ENCODE measurements at regions of chr16 and their contacts with region 1.

Region 1: GRCh38 chr16:89860747-89861304 is 12.6 kb upstream of the TCF25 start:
- DNase-seq: peak; percentile 82
- ATAC-seq: peak; percentile 81
- H3K4me3 Mint-ChIP-seq: no peak overlapping the region
- H3K27ac Mint-ChIP-seq: no peak overlapping the region
- H3K4me1 Mint-ChIP-seq: peaks cover 32% of the 10 kb centered on the region
- H3K27me3 Mint-ChIP-seq: no peaks in the 10 kb centered on the region

Region 2: DNA sequence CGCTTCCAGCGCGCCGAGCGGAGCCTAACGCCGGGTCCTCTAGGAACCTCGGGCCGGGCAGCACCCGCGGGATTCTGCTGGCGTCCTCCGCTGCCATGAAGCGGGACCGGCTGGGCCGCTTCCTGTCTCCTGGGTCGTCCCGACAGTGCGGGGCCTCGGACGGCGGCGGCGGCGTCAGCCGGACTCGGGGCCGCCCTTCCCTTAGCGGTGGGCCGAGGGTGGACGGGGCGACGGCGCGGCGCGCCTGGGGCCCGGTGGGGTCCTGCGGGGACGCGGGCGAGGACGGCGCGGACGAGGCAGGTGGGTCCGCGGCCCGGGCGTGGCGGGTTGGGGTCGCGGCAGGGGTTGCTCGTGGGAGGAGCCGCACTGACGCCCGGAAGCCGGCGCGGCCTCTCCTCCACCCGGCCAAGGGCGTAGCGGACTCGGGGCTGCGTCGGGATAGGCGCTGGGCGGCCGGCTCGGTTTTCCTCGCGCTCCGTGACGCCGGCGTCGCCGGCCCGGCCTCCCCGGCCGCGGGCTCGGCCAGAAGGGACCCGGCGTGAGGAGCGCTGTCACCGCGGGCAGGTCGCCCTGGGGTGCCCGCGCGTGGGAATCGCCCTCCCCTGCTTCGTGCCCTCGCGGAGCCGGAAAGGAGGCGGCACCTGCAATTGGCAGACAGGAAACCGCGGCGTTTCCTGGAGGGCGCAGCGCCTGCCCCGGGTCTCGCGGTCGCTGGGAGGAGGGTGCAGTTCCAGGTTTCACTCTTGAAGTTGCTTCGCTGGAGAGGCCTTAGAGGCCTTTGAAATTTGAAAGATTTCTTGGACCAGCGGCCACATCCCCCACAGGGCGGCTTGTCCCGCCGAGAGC is 139.1 kb before region 1 on chr16:
- CTCF ChIA-PET with region 1: interaction called, 17 read pairs
- POLR2A ChIA-PET with region 1: no interaction called
- DNase-seq: peak; percentile 91
- ATAC-seq: peak; percentile 40
- H3K4me3 Mint-ChIP-seq: peak overlapping the region; percentile 93
- H3K27ac Mint-ChIP-seq: peak overlapping the region; percentile 98
- H3K4me1 Mint-ChIP-seq: peaks cover 40% of the 10 kb centered on the region
- H3K27me3 Mint-ChIP-seq: no peaks in the 10 kb centered on the region

Region 3: DNA sequence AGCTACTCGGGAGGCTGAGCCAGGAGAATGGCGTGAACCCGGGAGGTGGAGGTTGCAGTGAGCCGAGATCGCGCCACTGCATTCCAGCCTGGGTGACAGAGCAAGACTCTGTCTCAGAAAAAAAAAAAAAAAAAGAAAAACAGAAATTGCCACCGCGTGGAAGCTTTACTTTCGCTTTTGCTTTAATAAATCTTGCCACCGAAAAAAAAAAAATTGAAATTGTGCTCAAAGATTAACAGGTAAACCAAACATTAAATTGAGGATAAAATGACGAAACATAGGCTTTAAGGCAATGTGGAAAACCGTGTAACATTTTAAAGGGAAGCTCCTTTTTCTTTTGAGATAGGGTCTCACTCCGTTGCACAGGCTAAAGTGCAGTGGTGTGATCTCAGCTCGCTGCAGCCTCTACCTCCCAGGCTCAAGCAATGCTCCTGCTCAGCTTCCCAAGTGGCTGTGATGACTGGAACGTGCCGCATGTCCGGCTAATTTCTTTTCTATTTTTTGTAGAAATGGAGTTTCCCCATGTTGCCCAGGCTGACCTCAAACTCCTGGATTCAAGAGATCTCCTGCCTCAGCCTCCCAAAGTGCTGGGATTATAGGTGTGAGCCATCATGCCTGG is 99.4 kb before region 1 on chr16:
- CTCF ChIA-PET with region 1: interaction called, 17 read pairs
- POLR2A ChIA-PET with region 1: no interaction called
- DNase-seq: no peak
- ATAC-seq: peak; percentile 31
- H3K4me3 Mint-ChIP-seq: peak overlapping the region; percentile 78
- H3K27ac Mint-ChIP-seq: peak overlapping the region; percentile 87
- H3K4me1 Mint-ChIP-seq: peaks cover 36% of the 10 kb centered on the region
- H3K27me3 Mint-ChIP-seq: no peaks in the 10 kb centered on the region

Region 4: GRCh38 chr16:89791278-89791995 is 69.4 kb before region 1 on chr16:
- CTCF ChIA-PET with region 1: interaction called, 22 read pairs
- POLR2A ChIA-PET with region 1: no interaction called
- DNase-seq: no peak
- ATAC-seq: no peak
- H3K4me3 Mint-ChIP-seq: no peak overlapping the region
- H3K27ac Mint-ChIP-seq: no peak overlapping the region
- H3K4me1 Mint-ChIP-seq: peaks cover 13% of the 10 kb centered on the region
- H3K27me3 Mint-ChIP-seq: no peaks in the 10 kb centered on the region

Region 5: DNA sequence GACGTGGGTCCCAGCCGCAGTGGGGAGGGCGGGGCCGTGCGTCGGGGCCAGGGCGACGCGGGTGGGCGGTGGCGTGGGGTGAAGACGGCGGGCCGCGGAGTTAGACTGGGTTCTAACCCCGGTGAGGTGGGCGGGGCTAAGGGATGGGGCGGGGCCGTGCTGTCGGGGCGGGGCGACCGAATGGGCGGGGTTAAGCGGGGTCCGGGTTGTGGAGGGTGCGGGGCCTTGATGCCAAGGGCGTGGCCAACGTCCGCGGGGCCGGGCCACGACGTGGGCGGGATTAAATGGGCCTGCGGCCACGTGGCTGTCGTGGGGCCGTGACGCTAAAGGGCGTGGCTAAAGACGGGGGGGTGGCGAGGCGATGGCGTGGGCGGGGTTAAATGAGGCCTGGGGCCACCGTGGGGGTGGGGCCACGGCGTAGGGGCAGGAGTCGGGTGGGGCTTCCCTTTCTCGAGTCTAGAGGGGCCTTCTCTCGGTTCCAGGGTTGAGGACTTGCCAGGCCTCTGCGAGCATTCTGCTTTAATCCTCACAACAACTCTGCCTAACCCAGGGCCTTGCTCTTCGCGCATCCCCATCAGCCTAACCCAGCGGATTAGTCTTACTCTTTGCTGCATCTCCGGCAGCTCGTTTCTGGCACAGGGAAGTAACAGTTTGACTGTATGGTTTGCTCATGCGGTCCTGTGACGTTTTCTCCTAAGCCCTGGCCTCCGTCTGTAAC is 13.3 kb after region 1 on chr16:
- CTCF ChIA-PET with region 1: interaction called, 41 read pairs
- POLR2A ChIA-PET with region 1: interaction called, 39 read pairs
- DNase-seq: peak; percentile 97
- ATAC-seq: peak; percentile 78
- H3K4me3 Mint-ChIP-seq: peak overlapping the region; percentile 89
- H3K27ac Mint-ChIP-seq: peak overlapping the region; percentile 99
- H3K4me1 Mint-ChIP-seq: peaks cover 19% of the 10 kb centered on the region
- H3K27me3 Mint-ChIP-seq: no peaks in the 10 kb centered on the region

Region 6: GRCh38 chr16:89922884-89923690 is 62.3 kb after region 1 on chr16 and contains the start of gene TUBB3:
- CTCF ChIA-PET with region 1: no interaction called
- POLR2A ChIA-PET with region 1: no interaction called
- DNase-seq: peak; percentile 65
- ATAC-seq: peak; percentile 33
- H3K4me3 Mint-ChIP-seq: peak within 1 kb of the TSS; percentile 57
- H3K27ac Mint-ChIP-seq: no peak within 1 kb of the TSS
- H3K4me1 Mint-ChIP-seq: peaks cover 46% of the 10 kb centered on the region
- H3K27me3 Mint-ChIP-seq: peaks cover 42% of the 10 kb centered on the region
- total RNA-seq, gene TUBB3: 1.1 to 1.3 TPM